AG04450 (cell line): ENCODE measurements at regions of chr2 and their contacts with region 1.

Region 1: GRCh38 chr2:221170548-221170947 is 401.6 kb downstream of the EPHA4 start:
- DNase-seq: no peak
- H3K4me3 ChIP-seq: no peak overlapping the region
- H3K27ac ChIP-seq: no peak overlapping the region
- H3K27me3 ChIP-seq: no peaks in the 10 kb centered on the region
- CTCF ChIP-seq: no peak

Region 2: GRCh38 chr2:220670461-220670979 is 500.0 kb before region 1 on chr2:
- CTCF ChIA-PET with region 1: interaction called, 11 read pairs
- POLR2A ChIA-PET with region 1: interaction called, 3 read pairs
- DNase-seq: no peak
- H3K4me3 ChIP-seq: no peak overlapping the region
- H3K27ac ChIP-seq: no peak overlapping the region
- H3K27me3 ChIP-seq: no peaks in the 10 kb centered on the region
- CTCF ChIP-seq: no peak

Region 3: DNA sequence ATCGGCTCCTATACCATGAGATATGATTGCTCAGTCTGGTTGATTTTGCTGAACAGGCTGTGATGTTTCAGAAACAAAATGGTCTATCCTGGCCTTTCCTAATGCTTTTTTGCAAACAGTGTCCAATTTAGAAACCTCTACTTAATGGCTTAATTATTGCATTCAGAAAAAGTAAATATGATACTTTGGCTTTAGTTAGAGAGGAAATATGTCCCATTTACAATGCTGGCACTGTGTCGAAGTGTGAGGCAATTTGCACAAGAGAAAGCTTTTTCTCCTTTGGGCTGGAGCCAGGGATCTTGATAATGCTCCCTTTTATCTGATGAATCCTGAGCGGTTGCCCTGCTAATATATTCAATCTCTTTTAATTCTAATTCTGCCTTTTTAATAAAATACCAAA is 17.3 kb before region 1 on chr2:
- CTCF ChIA-PET with region 1: no interaction called
- POLR2A ChIA-PET with region 1: no interaction called
- DNase-seq: no peak
- H3K4me3 ChIP-seq: no peak overlapping the region
- H3K27ac ChIP-seq: no peak overlapping the region
- H3K27me3 ChIP-seq: peaks cover 2% of the 10 kb centered on the region
- CTCF ChIP-seq: no peak